ENCODE measurements at regions of chr6 and their contacts with region 1.

Region 1: DNA sequence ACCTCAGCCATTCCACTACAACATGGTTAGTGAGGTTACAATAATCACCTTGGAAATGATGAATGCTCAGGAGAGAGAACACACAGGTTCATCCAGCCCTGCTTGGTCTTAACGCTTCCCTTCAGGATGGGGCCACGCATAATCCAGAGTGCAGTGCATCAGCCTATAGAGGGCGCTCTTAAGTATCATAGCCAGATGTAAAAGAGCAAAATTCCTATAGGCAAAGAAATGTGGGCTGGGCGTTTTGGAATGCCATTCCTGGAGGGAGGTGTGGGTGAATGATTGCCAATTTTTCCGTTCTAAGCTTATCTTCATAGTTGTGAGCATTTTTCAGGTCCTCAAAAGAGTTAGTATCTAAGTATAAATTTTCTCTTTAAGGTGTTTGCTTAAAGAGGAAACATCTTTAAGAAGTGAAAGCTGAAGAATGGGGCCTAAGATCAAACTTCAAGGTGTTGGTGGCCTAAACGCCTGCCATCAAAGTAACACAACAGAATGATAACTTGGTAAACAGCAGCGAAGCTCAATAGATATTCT is 1.8 kb downstream of the RIPOR2 start:
- DNase-seq: peak; percentile 61
- H3K4me3 Mint-ChIP-seq: peak overlapping the region; percentile 99
- H3K27ac Mint-ChIP-seq: peak overlapping the region; percentile 98
- H3K4me1 Mint-ChIP-seq: peaks cover 63% of the 10 kb centered on the region
- H3K27me3 Mint-ChIP-seq: no peaks in the 10 kb centered on the region

Region 2: DNA sequence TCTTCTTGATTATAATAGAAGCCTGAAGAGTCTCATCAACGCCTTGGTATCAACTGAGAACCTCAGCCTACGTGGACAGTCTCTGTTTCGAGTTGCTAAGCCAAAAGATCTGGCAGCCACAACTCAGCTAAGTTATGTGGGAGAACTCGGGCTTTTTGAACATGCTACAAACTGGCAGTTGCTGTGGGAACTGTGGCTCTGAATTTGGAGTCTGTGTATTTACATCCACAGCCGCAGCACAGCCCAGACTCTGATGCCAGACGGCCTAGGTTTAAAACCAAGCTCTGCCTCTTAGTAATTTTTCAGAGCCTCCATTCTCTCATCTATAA is 34.0 kb before region 1 on chr6:
- CTCF ChIA-PET with region 1: interaction called, 4 read pairs
- POLR2A ChIA-PET with region 1: interaction called, 34 read pairs
- DNase-seq: peak; percentile 21
- H3K4me3 Mint-ChIP-seq: no peak overlapping the region
- H3K27ac Mint-ChIP-seq: peak overlapping the region; percentile 62
- H3K4me1 Mint-ChIP-seq: peaks cover 66% of the 10 kb centered on the region
- H3K27me3 Mint-ChIP-seq: no peaks in the 10 kb centered on the region

Region 3: GRCh38 chr6:24949020-24949569 is 15.2 kb after region 1 on chr6:
- CTCF ChIA-PET with region 1: interaction called, 200 read pairs
- POLR2A ChIA-PET with region 1: interaction called, 839 read pairs
- DNase-seq: peak; percentile 85
- H3K4me3 Mint-ChIP-seq: peak overlapping the region; percentile 40
- H3K27ac Mint-ChIP-seq: peak overlapping the region; percentile 95
- H3K4me1 Mint-ChIP-seq: peaks cover 74% of the 10 kb centered on the region
- H3K27me3 Mint-ChIP-seq: no peaks in the 10 kb centered on the region

Region 4: DNA sequence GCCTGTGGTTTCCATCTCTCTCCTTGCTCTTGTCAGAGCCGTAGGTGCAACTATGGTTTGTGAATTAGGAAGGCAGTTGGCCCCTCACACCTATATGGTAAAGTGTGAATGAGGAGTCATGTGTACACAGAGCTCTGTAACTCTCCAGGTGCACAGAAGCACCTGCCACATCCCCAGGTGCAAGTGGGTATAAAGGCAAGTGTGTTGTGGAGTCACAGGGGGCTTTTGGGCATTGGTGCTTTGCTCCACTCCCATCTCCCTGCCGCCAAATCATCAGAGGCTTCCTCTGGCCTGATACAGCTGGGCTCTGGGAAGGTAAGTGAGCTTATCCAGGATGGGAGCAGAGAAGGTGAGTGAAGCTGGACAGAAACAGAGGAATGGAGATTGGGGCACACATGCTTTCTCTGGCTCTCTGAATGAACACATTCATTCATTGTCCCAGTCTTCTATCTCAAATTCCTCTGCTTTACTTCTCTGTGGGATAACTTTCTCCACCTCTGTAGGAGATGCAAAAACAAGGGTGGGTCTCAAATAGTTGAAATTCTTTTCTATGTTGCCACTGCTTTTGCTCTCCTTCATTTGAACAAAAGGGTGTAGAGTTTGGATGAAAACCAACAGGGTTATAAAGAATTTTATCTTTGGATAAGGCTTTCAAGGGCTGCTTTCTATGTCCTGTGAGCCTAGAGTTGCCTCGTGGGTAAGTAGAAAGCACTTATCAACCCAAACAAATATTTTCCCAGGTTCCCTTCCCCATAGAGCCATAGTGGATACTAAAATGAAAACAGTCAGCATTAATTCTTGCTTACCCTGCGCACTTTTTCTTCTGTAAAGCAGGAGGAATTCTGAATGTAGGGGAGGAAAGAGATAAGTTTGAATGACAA is 46.8 kb after region 1 on chr6:
- CTCF ChIA-PET with region 1: interaction called, 23 read pairs
- POLR2A ChIA-PET with region 1: interaction called, 141 read pairs
- DNase-seq: no peak
- H3K4me3 Mint-ChIP-seq: no peak overlapping the region
- H3K27ac Mint-ChIP-seq: no peak overlapping the region
- H3K4me1 Mint-ChIP-seq: peaks cover 24% of the 10 kb centered on the region
- H3K27me3 Mint-ChIP-seq: no peaks in the 10 kb centered on the region

Region 5: GRCh38 chr6:25017932-25018567 is 84.1 kb after region 1 on chr6:
- CTCF ChIA-PET with region 1: interaction called, 49 read pairs
- POLR2A ChIA-PET with region 1: interaction called, 35 read pairs
- DNase-seq: peak; percentile 88
- H3K4me3 Mint-ChIP-seq: no peak overlapping the region
- H3K27ac Mint-ChIP-seq: peak overlapping the region; percentile 46
- H3K4me1 Mint-ChIP-seq: peaks cover 45% of the 10 kb centered on the region
- H3K27me3 Mint-ChIP-seq: no peaks in the 10 kb centered on the region

Region 6: GRCh38 chr6:25053875-25054371 is 120.0 kb after region 1 on chr6:
- CTCF ChIA-PET with region 1: interaction called, 15 read pairs
- POLR2A ChIA-PET with region 1: interaction called, 4 read pairs
- DNase-seq: no peak
- H3K4me3 Mint-ChIP-seq: no peak overlapping the region
- H3K27ac Mint-ChIP-seq: peak overlapping the region; percentile 74
- H3K4me1 Mint-ChIP-seq: peaks cover 86% of the 10 kb centered on the region
- H3K27me3 Mint-ChIP-seq: no peaks in the 10 kb centered on the region

Measured in activated CD4-positive, alpha-beta memory T cell treated with anti-CD3 and anti-CD28 coated beads, Interleukin-2, amount 10 ng/mL, durations not matched to agents 7 days and 5 days (primary cell).